ENCODE measurements at regions of chr7 and their contacts with region 1.

Region 1: GRCh38 chr7:158143196-158144120 is 444.2 kb downstream of the PTPRN2 start:
- DNase-seq: no peak
- H3K4me3 ChIP-seq: no peak overlapping the region
- H3K27ac ChIP-seq: no peak overlapping the region
- H3K4me1 ChIP-seq: no peaks in the 10 kb centered on the region
- H3K27me3 ChIP-seq: no peaks in the 10 kb centered on the region
- CTCF ChIP-seq: no peak

Region 2: DNA sequence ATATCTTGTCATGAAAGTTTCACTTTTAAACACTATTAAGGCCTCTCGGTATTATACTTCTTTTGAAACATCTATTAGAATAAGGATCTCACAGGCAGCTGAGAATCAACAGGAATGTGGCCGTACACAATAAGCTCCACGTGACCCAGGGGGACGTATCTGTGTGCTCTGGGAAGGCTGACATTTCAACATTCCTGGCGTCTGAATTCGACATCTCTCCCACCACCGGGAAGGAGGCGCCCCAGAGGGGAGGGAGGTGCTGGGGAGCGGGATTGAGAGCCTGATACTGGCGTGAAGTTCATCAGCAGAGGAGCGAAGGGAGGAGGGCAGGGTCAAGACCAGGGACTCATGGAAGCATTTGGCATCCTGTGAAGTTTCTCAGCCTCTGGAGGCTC is 405.4 kb before region 1 on chr7:
- CTCF ChIA-PET with region 1: no interaction called
- POLR2A ChIA-PET with region 1: interaction called, 11 read pairs
- intact Hi-C with region 1: no loop called
- DNase-seq: peak; percentile 7
- H3K4me3 ChIP-seq: no peak overlapping the region
- H3K27ac ChIP-seq: no peak overlapping the region
- H3K4me1 ChIP-seq: no peaks in the 10 kb centered on the region
- H3K27me3 ChIP-seq: peaks cover 65% of the 10 kb centered on the region
- CTCF ChIP-seq: no peak

Region 3: DNA sequence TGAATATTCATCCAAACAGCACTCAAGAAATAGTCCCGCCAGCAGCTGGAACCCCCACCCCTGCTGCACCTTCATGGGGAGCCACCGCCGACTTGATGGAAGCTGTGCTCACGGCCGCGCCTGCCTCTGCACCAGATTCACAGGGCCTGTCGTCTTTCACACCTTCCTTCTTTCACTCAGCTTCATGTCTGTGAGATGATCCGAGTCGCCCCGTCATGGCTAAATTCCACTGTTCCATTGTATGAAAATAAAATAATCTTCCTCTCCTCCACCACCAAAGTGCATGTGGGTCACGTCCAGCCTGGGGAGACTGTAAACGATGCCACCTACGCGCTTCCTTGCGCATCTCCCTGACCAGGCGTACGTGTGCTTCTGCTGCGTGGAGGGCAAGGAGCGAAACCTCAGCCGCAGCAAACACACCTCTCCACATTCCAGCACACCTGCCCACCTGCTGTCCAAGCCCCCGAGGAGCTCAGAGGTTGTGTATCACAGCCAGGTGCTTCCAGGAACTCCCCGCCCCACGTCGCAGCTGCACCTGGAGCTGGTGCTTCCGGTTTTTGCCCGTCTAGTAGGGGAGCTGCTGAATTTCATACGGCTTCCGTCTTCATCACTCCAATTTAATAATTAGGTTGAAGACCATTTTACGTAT is 307.1 kb after region 1 on chr7:
- CTCF ChIA-PET with region 1: no interaction called
- POLR2A ChIA-PET with region 1: no interaction called
- intact Hi-C with region 1: no loop called
- DNase-seq: no peak
- H3K4me3 ChIP-seq: no peak overlapping the region
- H3K27ac ChIP-seq: no peak overlapping the region
- H3K4me1 ChIP-seq: no peaks in the 10 kb centered on the region
- H3K27me3 ChIP-seq: peaks cover 10% of the 10 kb centered on the region
- CTCF ChIP-seq: no peak

Measured in A673 (cell line).